ENCODE measurements at regions of chr18 and their contacts with region 1.

Region 1: GRCh38 chr18:43919551-43919950 is 642.3 kb upstream of the SYT4 start:
- DNase-seq: no peak
- H3K4me3 ChIP-seq: no peak overlapping the region
- H3K27ac ChIP-seq: no peak overlapping the region
- H3K27me3 ChIP-seq: no peaks in the 10 kb centered on the region
- CTCF ChIP-seq: no peak

Region 2: GRCh38 chr18:43949291-43949690 is 29.7 kb after region 1 on chr18:
- CTCF ChIA-PET with region 1: interaction called, 10 read pairs
- POLR2A ChIA-PET with region 1: no interaction called
- DNase-seq: no peak
- H3K4me3 ChIP-seq: no peak overlapping the region
- H3K27ac ChIP-seq: no peak overlapping the region
- H3K27me3 ChIP-seq: no peaks in the 10 kb centered on the region
- CTCF ChIP-seq: no peak

Measured in AG04450 (cell line).